Activated CD8-positive, alpha-beta memory T cell treated with anti-CD3 and anti-CD28 coated beads, Interleukin-2, amount 10 ng/mL, durations not matched to agents 7 days and 5 days (primary cell): ENCODE measurements at regions of chr11 and their contacts with region 1.

Region 1: GRCh38 chr11:63671322-63672155 is at the start of gene ATL3:
- DNase-seq: peak; percentile 97
- ATAC-seq: peak; percentile 93
- H3K4me3 Mint-ChIP-seq: peak within 1 kb of the TSS; percentile 78
- H3K27ac Mint-ChIP-seq: peak within 1 kb of the TSS; percentile 85
- H3K4me1 Mint-ChIP-seq: peaks cover 34% of the 10 kb centered on the region
- H3K27me3 Mint-ChIP-seq: no peaks in the 10 kb centered on the region
- total RNA-seq, gene ATL3: 28.8 to 31.9 TPM

Region 2: DNA sequence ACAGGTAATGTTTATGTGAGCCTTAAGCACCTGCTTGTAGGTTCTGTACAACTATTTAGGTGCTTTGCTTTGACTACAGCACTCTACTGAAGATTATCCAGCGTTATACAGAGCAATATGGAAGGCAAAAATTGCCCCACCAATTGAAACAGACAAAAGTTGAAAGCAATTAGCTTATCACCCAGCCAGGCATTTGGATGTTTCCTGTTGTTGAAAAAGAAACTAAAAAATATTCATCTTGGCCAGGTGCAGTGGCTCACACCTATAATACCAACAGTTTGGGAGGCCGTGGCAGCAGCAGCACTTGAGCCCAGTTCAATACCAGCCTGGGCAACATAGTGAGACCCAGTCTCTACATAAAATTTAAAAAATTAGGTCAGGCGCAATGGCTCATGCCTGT is 18.9 kb before region 1 on chr11:
- CTCF ChIA-PET with region 1: interaction called, 12 read pairs
- DNase-seq: no peak
- ATAC-seq: peak; percentile 30
- H3K4me3 Mint-ChIP-seq: no peak overlapping the region
- H3K27ac Mint-ChIP-seq: peak overlapping the region; percentile 45
- H3K4me1 Mint-ChIP-seq: peaks cover 20% of the 10 kb centered on the region
- H3K27me3 Mint-ChIP-seq: no peaks in the 10 kb centered on the region